Psoas muscle (tissue), 8 donors: ENCODE measurements at regions of chr1 and their contacts with region 1.

Region 1: DNA sequence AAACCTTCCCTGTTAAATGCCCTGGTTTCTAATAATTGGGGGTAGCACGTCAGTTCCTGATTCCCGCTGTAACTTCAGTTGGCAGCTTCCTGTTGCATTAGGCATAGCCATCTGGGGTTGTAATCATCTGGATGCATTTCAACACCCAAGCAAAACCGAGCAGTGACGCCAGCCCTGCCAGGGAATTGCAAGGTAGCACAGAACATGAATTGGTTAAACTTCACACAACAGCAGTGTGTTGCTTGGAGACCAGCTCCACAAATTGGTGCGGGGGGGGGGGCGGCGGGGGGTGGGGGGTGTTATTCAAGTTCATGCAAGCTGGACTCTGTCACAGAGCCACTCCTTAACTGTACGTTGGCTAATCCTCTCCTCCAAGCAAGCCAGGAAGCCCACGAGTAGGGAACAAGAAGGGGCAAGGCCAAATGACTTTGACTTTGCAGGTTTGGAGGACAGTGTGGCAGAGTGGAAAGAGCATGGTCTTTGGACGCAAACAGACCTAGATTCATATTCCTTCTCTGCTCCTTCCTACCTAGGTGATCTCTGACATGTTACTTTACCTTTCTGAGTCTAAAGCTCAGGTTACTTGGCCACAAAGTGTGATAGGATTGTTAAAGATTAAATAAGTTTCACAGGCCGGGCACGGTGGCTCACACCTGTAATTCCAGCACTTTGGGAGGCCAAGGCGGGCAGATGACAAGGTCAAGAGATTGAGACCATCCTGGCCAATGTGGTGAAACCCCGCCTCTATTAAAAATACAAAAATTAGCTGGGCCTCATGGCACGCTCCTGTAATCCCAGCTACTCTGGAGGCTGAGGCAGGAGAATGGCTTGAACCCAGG is 4.7 kb downstream of the LAX1 start:
- DNase-seq: peak; percentile 75 to 88
- ATAC-seq: peak; percentile 78 to 85 (median 82)
- H3K4me3 ChIP-seq: peak overlapping the region; percentile 56
- H3K27ac ChIP-seq: peak overlapping the region; percentile 64
- H3K4me1 ChIP-seq: peaks cover 20% of the 10 kb centered on the region
- H3K27me3 ChIP-seq: no peaks in the 10 kb centered on the region
- CTCF ChIP-seq: no peak

Region 2: GRCh38 chr1:203733009-203733863 is 36.5 kb before region 1 on chr1:
- intact Hi-C with region 1: loop called in 1 of 2 experiments (anchors 1 kb)
- DNase-seq: no peak
- ATAC-seq: no peak
- H3K4me3 ChIP-seq: no peak overlapping the region
- H3K27ac ChIP-seq: no peak overlapping the region
- H3K4me1 ChIP-seq: no peaks in the 10 kb centered on the region
- H3K27me3 ChIP-seq: no peaks in the 10 kb centered on the region
- CTCF ChIP-seq: no peak

Region 3: GRCh38 chr1:203789956-203790355 is 20.2 kb after region 1 on chr1:
- intact Hi-C with region 1: loop called in 1 of 2 experiments (anchors 2 kb)
- DNase-seq: no peak
- ATAC-seq: no peak
- H3K4me3 ChIP-seq: no peak overlapping the region
- H3K27ac ChIP-seq: no peak overlapping the region
- H3K4me1 ChIP-seq: peaks cover 2% of the 10 kb centered on the region
- H3K27me3 ChIP-seq: no peaks in the 10 kb centered on the region
- CTCF ChIP-seq: no peak